Transverse colon (tissue), 4 donors: ENCODE measurements at regions of chr7 and their contacts with region 1.

Region 1: GRCh38 chr7:65279795-65280194 is 93.9 kb upstream of the ZNF92 start:
- DNase-seq: no peak
- H3K4me3 ChIP-seq: no peak overlapping the region
- H3K27ac ChIP-seq: no peak overlapping the region
- H3K4me1 ChIP-seq: no peaks in the 10 kb centered on the region
- H3K27me3 ChIP-seq: peaks cover 5% of the 10 kb centered on the region
- CTCF ChIP-seq: no peak
- EP300 ChIP-seq: no peak
- POLR2A ChIP-seq: no peak

Region 2: GRCh38 chr7:65233409-65234019 is 46.3 kb before region 1 on chr7:
- in situ Hi-C with region 1: loop called in 1 of 4 experiments (anchors 5 kb)
- intact Hi-C with region 1: no loop called
- DNase-seq: no peak
- H3K4me3 ChIP-seq: no peak overlapping the region
- H3K27ac ChIP-seq: no peak overlapping the region
- H3K4me1 ChIP-seq: no peaks in the 10 kb centered on the region
- H3K27me3 ChIP-seq: peaks cover 6% of the 10 kb centered on the region
- CTCF ChIP-seq: no peak
- EP300 ChIP-seq: no peak
- POLR2A ChIP-seq: no peak